ENCODE measurements at regions of chr2 and their contacts with region 1.

Region 1: GRCh38 chr2:216404010-216404618 is 8.2 kb upstream of the SMARCAL1 start:
- DNase-seq: peak in 8 of 9 experiments; percentile 15 to 70 (median 54)
- ATAC-seq: peak; percentile 75
- H3K4me3 ChIP-seq: no peak overlapping the region
- H3K4me3 Mint-ChIP-seq: no peak overlapping the region
- H3K27ac ChIP-seq: no peak overlapping the region
- H3K27ac Mint-ChIP-seq: no peak overlapping the region
- H3K4me1 ChIP-seq: no peaks in the 10 kb centered on the region
- H3K4me1 Mint-ChIP-seq: peaks cover 5% of the 10 kb centered on the region
- H3K27me3 ChIP-seq: no peaks in the 10 kb centered on the region
- H3K27me3 Mint-ChIP-seq: no peaks in the 10 kb centered on the region
- CTCF ChIP-seq: peak; percentile 96

Region 2: DNA sequence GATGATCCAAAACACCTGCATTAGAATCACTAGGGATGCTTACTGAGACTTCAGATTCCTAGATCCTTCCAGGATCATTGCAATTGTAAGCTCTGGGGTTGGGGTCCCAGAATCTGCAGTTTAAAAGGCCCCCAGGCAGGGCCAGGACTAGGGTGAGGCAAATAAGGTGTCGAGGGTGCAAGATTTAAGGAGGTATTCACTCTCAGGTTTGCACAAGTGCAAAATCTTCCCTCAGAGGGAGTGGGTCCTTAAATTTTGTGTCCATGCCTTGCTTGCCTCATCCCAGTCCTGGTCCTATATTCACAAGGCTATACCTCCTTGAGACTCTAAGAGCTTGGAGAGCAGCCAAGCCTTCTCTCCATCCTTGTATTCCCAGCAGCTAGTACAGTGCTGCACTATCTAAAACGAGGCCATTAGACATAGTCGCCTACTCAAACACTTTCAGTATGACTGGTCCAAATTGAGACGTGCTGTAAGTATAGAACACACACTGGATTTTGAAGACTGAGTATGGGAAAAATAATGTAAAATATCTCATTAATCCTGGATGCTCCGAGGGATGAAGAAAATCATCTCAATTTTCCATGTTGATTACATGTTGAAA is 359.1 kb before region 1 on chr2:
- CTCF ChIA-PET with region 1: no interaction called
- POLR2A ChIA-PET with region 1: no interaction called
- intact Hi-C with region 1: no loop called
- DNase-seq: no peak
- ATAC-seq: no peak
- H3K4me3 ChIP-seq: no peak overlapping the region
- H3K4me3 Mint-ChIP-seq: no peak overlapping the region
- H3K27ac ChIP-seq: no peak overlapping the region
- H3K27ac Mint-ChIP-seq: no peak overlapping the region
- H3K4me1 ChIP-seq: no peaks in the 10 kb centered on the region
- H3K4me1 Mint-ChIP-seq: no peaks in the 10 kb centered on the region
- H3K27me3 ChIP-seq: no peaks in the 10 kb centered on the region
- H3K27me3 Mint-ChIP-seq: no peaks in the 10 kb centered on the region
- CTCF ChIP-seq: no peak

Region 3: DNA sequence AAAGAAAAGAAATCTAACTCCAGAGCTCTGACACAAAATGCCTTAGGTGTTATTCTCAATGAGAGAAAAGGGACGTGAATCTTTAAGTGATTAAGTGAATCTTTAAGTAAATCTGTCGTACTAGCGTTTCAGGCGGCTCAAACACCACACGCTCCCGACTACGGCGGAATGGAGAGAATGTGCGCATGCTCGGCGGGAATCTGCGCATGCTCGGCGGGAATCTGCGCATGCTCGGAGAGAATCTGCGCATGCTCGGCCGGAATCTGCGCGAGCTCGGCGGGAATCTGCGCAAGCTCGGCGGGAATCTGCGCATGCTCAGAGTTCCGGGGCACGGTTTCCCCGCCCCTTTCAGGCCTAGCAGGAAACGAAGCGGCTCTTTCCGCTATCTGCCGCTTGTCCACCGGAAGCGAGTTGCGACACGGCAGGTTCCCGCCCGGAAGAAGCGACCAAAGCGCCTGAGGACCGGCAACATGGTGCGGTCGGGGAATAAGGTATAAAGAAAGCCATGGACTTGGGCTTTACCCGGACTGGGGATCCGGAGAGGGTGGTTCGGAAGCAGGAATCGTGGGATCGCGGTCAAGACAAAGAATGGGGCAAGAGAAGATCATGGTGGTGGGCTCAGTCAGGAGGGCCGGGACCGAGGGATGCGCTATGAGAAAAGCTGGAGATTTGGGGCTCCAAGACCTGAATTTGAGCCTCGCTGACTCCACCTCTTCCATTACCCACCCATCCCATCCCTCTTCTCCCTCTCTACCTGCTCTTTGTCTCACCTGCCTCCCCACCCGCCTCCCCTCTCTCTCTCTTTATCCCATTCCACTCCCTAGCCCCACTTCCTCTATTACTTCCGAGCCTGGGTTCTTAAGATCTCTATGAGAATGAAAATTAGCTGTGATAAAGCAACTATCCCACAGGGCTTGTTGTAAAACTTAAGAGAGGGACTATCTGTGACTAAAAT is 294.9 kb before region 1 on chr2 and contains the start of gene XRCC5:
- CTCF ChIA-PET with region 1: interaction called, 4 read pairs
- POLR2A ChIA-PET with region 1: no interaction called
- intact Hi-C with region 1: loop called in 1 of 2 experiments (anchors 1 kb)
- DNase-seq: peak; percentile 93 to 99 (median 99)
- ATAC-seq: peak; percentile 84
- H3K4me3 ChIP-seq: peak within 1 kb of the TSS; percentile 96
- H3K4me3 Mint-ChIP-seq: peak within 1 kb of the TSS; percentile 100
- H3K27ac ChIP-seq: peak within 1 kb of the TSS; percentile 92 to 96
- H3K27ac Mint-ChIP-seq: peak within 1 kb of the TSS; percentile 100
- H3K4me1 ChIP-seq: peaks cover 46% of the 10 kb centered on the region
- H3K4me1 Mint-ChIP-seq: peaks cover 51% of the 10 kb centered on the region
- H3K27me3 ChIP-seq: no peaks in the 10 kb centered on the region
- H3K27me3 Mint-ChIP-seq: no peaks in the 10 kb centered on the region
- CTCF ChIP-seq: no peak
- total RNA-seq, gene XRCC5: 120 to 125 TPM

Region 4: GRCh38 chr2:216222650-216223352 is 181.3 kb before region 1 on chr2:
- CTCF ChIA-PET with region 1: interaction called, 34 read pairs
- POLR2A ChIA-PET with region 1: no interaction called
- intact Hi-C with region 1: loop called (anchors 2 to 5 kb)
- DNase-seq: peak in 2 of 9 experiments; percentile 18 to 34
- ATAC-seq: no peak
- H3K4me3 ChIP-seq: no peak overlapping the region
- H3K4me3 Mint-ChIP-seq: no peak overlapping the region
- H3K27ac ChIP-seq: no peak overlapping the region
- H3K27ac Mint-ChIP-seq: no peak overlapping the region
- H3K4me1 ChIP-seq: no peaks in the 10 kb centered on the region
- H3K4me1 Mint-ChIP-seq: peaks cover 9% of the 10 kb centered on the region
- H3K27me3 ChIP-seq: no peaks in the 10 kb centered on the region
- H3K27me3 Mint-ChIP-seq: no peaks in the 10 kb centered on the region
- CTCF ChIP-seq: no peak

Region 5: DNA sequence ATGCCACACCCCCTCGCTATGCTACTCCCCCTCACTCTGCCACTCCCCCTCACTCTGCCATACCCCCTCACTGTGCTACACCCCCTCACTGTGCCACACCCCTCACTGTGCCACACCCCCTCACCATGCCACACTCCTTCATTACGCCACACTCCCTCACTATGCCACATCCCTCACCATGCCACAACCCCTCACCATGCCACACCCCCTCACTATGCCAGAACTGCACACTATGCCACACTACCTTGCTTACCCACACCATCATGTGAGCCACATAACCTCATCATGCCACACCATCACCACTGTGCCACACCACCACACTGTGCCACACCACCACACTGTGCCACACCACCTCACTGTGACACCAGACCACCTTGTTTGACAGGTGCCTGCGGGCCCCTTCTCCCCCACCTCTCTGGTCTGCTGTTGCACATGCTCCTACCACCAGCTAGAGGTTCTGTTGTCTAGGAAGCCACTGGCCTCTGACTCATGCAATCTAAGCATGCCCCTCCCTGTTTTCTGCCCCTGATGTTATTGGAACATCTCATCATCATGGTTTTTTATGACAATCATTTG is 53.8 kb before region 1 on chr2:
- CTCF ChIA-PET with region 1: interaction called, 14 read pairs
- POLR2A ChIA-PET with region 1: no interaction called
- intact Hi-C with region 1: loop called (anchors 1 to 2 kb)
- DNase-seq: peak in 7 of 9 experiments; percentile 22 to 70 (median 58)
- ATAC-seq: peak; percentile 67
- H3K4me3 ChIP-seq: no peak overlapping the region
- H3K4me3 Mint-ChIP-seq: no peak overlapping the region
- H3K27ac ChIP-seq: peak overlapping the region in 1 of 2 experiments; percentile 74
- H3K27ac Mint-ChIP-seq: peak overlapping the region; percentile 78
- H3K4me1 ChIP-seq: peaks cover 80% of the 10 kb centered on the region
- H3K4me1 Mint-ChIP-seq: peaks cover 87% of the 10 kb centered on the region
- H3K27me3 ChIP-seq: no peaks in the 10 kb centered on the region
- H3K27me3 Mint-ChIP-seq: no peaks in the 10 kb centered on the region
- CTCF ChIP-seq: no peak

Region 6: DNA sequence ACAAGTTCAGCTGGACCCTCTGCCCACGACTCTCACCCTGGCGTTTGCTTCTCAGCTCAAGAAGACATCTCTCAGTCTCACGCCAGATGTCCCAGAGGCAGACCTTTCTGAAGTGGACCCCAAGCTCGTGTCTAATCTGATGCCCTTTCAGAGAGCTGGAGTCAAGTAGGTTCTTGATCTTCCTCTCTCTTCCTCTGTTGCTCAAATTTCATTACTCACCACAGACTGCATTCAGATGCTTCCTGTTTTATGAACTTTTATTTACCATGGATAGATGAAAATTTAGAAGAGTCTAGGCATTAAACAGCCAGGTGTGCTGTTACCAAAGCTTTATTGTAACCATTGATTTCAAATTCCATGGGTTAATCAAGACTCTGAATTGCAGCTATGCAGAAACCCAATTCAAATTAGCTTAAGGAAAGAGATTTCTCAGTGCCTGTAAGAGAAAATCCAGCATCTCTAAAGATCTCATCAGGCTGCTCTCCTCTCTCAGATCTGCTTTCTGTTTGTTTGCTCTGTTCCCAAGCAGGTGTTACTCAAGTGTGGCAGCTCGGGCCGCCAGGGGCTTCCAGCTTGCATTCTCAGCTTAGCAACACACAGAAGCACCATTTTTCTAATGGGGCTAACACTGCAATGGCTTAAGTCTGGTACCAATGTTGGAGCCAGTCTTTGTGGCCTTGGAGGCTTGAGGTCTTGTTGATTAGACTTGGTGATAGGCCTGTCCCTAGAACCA is 24.7 kb after region 1 on chr2:
- CTCF ChIA-PET with region 1: interaction called, 3 read pairs
- POLR2A ChIA-PET with region 1: no interaction called
- intact Hi-C with region 1: loop called in 1 of 2 experiments (anchors 1 kb)
- DNase-seq: no peak
- ATAC-seq: no peak
- H3K4me3 ChIP-seq: no peak overlapping the region
- H3K4me3 Mint-ChIP-seq: no peak overlapping the region
- H3K27ac ChIP-seq: no peak overlapping the region
- H3K27ac Mint-ChIP-seq: no peak overlapping the region
- H3K4me1 ChIP-seq: no peaks in the 10 kb centered on the region
- H3K4me1 Mint-ChIP-seq: no peaks in the 10 kb centered on the region
- H3K27me3 ChIP-seq: no peaks in the 10 kb centered on the region
- H3K27me3 Mint-ChIP-seq: no peaks in the 10 kb centered on the region
- CTCF ChIP-seq: no peak